ENCODE measurements at regions of chr5 and their contacts with region 1.

Region 1: DNA sequence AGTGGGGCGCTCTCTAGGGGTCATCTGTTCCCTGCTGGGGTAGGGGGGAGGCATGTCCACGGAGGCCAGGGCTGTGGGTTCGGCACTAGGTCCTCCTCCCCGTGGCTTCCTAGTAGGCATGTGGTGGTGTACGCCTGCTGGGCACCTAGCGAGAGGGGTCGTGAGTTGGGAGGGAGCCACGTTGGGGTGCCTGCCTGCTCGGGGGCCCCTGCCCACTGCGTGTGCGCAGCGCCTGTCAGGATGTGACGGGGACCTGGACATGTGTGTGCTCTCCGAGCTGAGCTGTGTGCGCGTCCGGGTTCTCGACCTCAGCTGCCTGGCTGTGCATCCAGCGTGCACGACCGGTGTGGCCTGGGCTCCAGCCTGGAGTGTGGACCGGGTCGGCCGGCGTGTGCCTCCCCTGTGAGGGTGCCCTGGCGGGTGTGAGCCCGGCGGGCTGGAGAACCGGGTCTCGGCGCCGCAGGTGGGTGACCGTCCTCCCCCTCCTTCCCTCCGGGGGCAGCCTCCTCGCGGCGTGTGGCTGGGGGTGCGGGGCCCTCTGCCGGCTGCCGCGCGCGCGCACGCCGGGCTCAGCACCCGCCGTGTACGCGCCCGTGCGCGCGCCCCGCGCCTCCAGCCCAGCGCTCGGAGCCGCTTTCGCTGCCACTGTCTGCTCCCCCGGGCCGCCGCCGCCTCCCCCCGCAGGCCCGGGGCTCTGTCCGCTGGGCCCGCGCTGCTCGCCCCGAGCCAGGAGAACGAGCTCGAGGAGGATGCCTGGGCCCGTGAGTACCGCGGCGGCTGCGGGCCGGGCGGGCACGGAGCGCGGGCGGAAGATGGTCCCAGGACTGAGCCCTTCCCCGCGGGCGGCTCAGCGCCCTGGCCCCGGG is at the start of gene PRR7:
- DNase-seq: peak; percentile 37 to 79
- H3K4me3 ChIP-seq: peak within 1 kb of the TSS; percentile 47
- H3K4me1 ChIP-seq: peaks cover 13% of the 10 kb centered on the region
- H3K27me3 ChIP-seq: no peaks in the 10 kb centered on the region

Region 2: GRCh38 chr5:177311723-177312648 is 134.4 kb before region 1 on chr5 and contains the start of gene MXD3:
- in situ Hi-C with region 1: loop called (anchors 10 kb)
- DNase-seq: peak; percentile 98 to 100
- H3K4me3 ChIP-seq: peak within 1 kb of the TSS; percentile 87
- H3K4me1 ChIP-seq: peaks cover 24% of the 10 kb centered on the region
- H3K27me3 ChIP-seq: no peaks in the 10 kb centered on the region

Region 3: GRCh38 chr5:177390363-177391300 is 55.8 kb before region 1 on chr5:
- in situ Hi-C with region 1: loop called (anchors 5 kb)
- DNase-seq: peak; percentile 80 to 93
- H3K4me3 ChIP-seq: no peak overlapping the region
- H3K4me1 ChIP-seq: no peaks in the 10 kb centered on the region
- H3K27me3 ChIP-seq: peaks cover under 1% of the 10 kb centered on the region; the same call in 1 of the 2 replicates